Pancreas (tissue), 10 donors: ENCODE measurements at regions of chr6 and their contacts with region 1.

Region 1: GRCh38 chr6:139375232-139376016 is 976 bp upstream of the CITED2 start:
- DNase-seq: peak; percentile 92 to 95 (median 93)
- ATAC-seq: peak; percentile 77 to 84 (median 79)
- H3K4me3 ChIP-seq: peak overlapping the region; percentile 74 to 93 (median 88)
- H3K27ac ChIP-seq: peak overlapping the region; percentile 96 to 99 (median 98)
- H3K4me1 ChIP-seq: peaks cover 0 to 18% (median 11%) of the 10 kb centered on the region in 3 donors
- H3K27me3 ChIP-seq: no peaks in the 10 kb centered on the region
- CTCF ChIP-seq: no peak

Region 2: DNA sequence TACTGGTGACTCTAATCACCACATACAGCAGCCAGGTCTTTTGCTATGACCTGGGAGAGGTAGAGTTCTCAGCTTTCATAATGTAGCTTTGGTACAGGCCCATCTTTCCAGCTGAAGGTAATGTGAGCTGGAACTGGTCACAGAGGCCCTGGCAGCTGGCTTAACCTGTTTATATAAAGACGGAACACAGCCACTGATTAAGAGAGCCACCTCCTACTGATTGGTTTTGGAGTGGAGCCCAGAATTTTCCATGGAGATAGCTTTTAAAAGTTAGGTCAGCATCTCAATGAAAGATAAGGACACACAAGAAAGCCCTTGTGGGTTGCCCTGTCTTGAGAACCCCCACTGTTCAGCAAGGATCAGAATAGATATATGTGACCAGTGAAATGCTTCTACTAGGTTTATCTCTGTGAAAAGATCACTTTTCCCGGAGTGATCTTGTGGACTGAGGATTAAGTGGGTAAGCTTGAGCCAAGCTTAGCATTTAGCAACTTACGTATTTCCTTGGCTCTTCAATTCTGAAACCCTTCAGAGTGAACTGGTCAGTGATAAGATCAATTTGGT is 212.7 kb after region 1 on chr6:
- intact Hi-C with region 1: loop called in 2 of 3 experiments (anchors 5 to 10 kb)
- DNase-seq: peak in 4 of 6 donors; percentile 73 to 87 (median 80)
- ATAC-seq: peak; percentile 78 to 86 (median 83)
- H3K4me3 ChIP-seq: no peak overlapping the region
- H3K27ac ChIP-seq: peak overlapping the region; percentile 40 to 91 (median 74)
- H3K4me1 ChIP-seq: peaks cover 37 to 57% (median 49%) of the 10 kb centered on the region in 3 donors
- H3K27me3 ChIP-seq: no peaks in the 10 kb centered on the region
- CTCF ChIP-seq: no peak

Region 3: DNA sequence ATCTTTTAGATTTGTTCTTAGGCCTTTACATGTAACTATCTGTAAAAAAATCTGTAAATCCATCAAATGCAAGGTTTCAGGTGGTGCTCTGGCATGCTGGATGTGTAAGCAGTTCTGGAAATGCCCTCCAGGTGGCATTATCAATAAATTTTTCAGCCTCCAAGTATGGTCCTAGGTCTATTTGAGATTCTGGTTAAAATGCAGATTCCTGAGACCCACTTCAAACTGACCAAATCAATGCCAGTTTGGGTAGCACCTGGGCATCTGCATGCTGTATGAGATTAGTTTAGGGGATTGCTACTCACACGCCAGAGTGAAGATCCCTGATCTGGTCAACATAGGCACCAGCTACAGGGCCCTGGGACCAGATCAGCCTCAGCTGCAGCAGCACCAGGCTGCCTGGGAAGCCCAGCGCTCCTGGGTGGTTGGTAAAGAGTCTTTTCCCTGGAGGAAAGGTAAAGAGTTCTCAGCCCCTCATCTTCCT is 506.3 kb after region 1 on chr6:
- intact Hi-C with region 1: loop called in 1 of 3 experiments (anchors 10 kb)
- DNase-seq: peak in 1 of 6 donors; percentile 45
- ATAC-seq: peak; percentile 83 to 89 (median 86)
- H3K4me3 ChIP-seq: no peak overlapping the region
- H3K27ac ChIP-seq: no peak overlapping the region
- H3K4me1 ChIP-seq: peaks cover 0 to 11% (median 4%) of the 10 kb centered on the region in 3 donors
- H3K27me3 ChIP-seq: no peaks in the 10 kb centered on the region
- CTCF ChIP-seq: peak; percentile 20 to 61 (median 50)

Region 4: DNA sequence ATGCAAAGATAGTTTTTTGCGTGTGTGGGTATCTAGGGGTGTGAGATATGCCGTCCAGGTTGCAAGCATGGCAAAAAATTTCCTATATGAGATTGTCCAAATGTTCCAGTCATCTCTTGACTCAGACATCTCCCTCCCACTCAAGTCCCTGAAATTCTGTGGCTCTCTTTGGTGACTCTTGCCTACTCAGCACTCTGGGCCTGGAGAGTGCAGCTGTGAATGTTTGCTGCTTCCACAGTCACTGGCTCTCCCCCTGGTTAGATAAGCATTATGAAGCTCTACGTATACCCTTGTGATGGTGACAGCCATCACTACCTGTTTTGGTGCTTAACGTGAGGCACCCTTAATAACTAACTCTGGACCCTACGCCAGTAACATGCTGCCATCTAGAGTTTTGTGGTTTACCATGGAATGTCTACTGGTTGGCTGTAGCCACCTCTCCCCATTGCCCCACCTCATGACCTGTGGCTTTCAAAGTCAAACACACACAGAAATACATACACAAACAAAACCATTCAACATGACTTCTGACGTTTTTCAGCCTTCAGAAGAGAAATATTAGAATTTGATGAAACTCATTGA is 620.9 kb after region 1 on chr6:
- intact Hi-C with region 1: loop called in 1 of 3 experiments (anchors 10 kb)
- DNase-seq: peak in 1 of 6 donors; percentile 13
- ATAC-seq: peak; percentile 46 to 92 (median 88)
- H3K4me3 ChIP-seq: no peak overlapping the region
- H3K27ac ChIP-seq: no peak overlapping the region
- H3K4me1 ChIP-seq: peaks cover 0 to 3% (median 0%) of the 10 kb centered on the region in 3 donors
- H3K27me3 ChIP-seq: no peaks in the 10 kb centered on the region
- CTCF ChIP-seq: no peak

Region 5: GRCh38 chr6:140915103-140915502 is 1539.7 kb after region 1 on chr6:
- intact Hi-C with region 1: loop called in 1 of 3 experiments (anchors 10 kb)
- DNase-seq: no peak
- ATAC-seq: no peak
- H3K4me3 ChIP-seq: no peak overlapping the region
- H3K27ac ChIP-seq: no peak overlapping the region
- H3K4me1 ChIP-seq: no peaks in the 10 kb centered on the region
- H3K27me3 ChIP-seq: no peaks in the 10 kb centered on the region
- CTCF ChIP-seq: no peak